Activated B cell treated with CpG ODN at 0.5 μM for 24 hours (primary cell): ENCODE measurements at regions of chr10 and their contacts with region 1.

Region 1: DNA sequence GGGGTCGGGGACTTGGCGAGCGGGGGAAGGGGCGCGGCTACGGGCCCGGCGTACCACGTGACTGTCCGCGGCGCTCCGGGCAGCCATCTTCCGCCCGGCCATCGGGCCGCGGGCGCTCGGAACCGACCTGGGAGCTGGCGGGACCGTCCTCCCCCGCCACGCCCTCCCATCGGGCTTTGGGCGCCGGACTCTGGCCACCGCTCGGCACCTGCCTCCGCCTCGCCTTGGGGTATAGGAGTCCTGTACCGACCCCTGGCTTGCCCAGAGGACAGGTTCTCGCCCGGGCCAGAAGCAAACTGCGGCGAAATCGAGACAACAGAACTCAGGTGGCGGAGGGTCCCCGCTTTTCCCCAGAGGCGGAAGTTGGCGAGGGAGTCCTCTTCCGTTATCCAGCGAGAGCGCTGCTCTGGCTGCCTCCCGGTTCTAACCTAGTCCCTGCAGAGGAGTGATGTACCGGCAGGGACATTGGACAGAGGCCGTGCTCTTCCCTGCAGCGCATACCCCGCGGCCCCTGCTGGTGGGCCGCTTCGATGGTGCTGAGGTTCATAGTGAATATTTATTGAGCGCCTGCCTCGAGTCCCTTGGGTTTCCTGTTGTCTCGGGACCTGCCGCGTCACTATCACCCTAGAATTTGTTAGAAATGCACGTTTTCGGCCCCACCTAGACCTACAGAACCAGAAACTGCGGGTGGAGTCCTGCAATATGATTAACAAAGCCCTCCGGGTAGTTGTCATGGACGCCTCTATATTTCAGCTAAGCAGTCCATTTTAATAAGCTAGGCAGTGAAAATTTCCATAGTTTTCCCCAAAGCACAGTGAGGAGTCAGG is 1.3 kb upstream of the SGMS1 start:
- DNase-seq: no peak
- ATAC-seq: peak; percentile 51
- H3K4me3 Mint-ChIP-seq: peak overlapping the region; percentile 91
- H3K27ac Mint-ChIP-seq: peak overlapping the region; percentile 96
- H3K4me1 Mint-ChIP-seq: peaks cover 30% of the 10 kb centered on the region
- H3K27me3 Mint-ChIP-seq: no peaks in the 10 kb centered on the region
- CTCF ChIP-seq: no peak

Region 2: DNA sequence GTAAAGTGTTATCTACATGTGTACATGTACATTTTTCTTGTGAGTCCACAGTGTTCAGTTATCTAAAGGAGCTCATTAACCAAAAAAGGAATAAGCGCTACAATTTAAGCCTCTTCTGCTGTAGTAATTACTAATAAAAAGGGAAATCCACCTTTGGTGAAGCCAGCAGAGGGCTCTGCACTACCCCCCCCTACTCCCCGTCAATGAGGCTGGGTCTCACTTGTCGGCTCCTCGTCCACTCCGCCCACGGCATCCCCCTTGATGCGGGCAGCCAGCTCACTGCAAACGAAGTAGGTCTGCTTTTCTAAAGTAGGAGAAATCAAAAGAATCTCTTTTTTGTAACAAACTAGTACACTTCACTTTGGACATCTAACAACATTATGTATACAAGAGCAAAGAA is 562.0 kb before region 1 on chr10:
- CTCF ChIA-PET with region 1: no interaction called
- POLR2A ChIA-PET with region 1: interaction called, 4 read pairs
- intact Hi-C with region 1: loop called (anchors 1 kb)
- DNase-seq: no peak
- ATAC-seq: no peak
- H3K4me3 Mint-ChIP-seq: no peak overlapping the region
- H3K27ac Mint-ChIP-seq: no peak overlapping the region
- H3K4me1 Mint-ChIP-seq: peaks cover 6% of the 10 kb centered on the region
- H3K27me3 Mint-ChIP-seq: no peaks in the 10 kb centered on the region
- CTCF ChIP-seq: no peak

Region 3: GRCh38 chr10:50275650-50276235 is 349.3 kb before region 1 on chr10:
- CTCF ChIA-PET with region 1: interaction called, 9 read pairs
- POLR2A ChIA-PET with region 1: no interaction called
- intact Hi-C with region 1: loop called (anchors 5 kb)
- DNase-seq: no peak
- ATAC-seq: peak; percentile 71
- H3K4me3 Mint-ChIP-seq: no peak overlapping the region
- H3K27ac Mint-ChIP-seq: no peak overlapping the region
- H3K4me1 Mint-ChIP-seq: peaks cover 1% of the 10 kb centered on the region
- H3K27me3 Mint-ChIP-seq: peaks cover 13% of the 10 kb centered on the region
- CTCF ChIP-seq: no peak

Region 4: DNA sequence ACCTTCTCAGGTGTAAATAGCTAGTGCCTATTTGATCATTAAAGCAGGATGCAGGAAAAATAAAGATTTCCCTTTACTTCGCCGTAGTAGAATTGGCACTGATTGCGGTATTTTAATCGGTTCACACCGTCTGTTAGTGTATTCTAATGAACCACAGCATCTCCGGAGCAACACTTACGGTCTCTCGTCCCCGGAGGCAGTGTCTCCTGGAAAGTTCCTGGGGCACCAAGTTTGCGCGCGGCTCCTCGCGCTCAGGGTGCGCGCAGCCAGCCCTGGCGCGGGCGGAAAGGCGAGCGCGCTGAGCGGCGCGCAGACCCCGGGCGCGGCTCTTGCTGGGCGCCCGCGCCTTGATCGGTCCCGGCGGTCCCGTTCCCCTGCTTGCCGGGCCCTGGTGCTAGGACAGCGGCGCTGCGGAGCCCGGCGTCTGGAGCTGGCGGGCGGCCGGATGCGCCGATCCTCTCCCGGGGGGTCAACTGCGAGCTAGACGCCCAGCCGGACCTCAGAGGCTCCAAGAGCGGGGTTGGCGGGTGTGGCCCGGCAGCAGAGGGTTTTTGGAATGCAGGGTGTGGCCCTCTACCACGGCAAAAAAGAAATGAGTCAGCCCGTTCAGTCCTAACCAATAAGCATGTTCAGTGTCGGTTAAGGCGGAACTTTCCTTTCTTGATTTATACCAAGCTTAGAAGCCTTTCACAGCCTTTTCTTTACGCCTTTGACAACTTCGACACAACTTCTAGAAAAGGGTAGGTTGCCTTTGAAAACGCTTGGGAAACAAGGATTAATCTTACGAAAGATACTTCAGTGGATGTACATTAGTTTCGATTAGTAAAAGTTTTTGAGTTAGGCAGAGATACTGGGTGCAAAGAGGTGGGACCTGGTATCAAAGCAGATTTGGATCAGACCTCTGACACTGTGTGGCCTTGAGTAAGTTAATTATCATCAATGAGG is 206.9 kb before region 1 on chr10:
- CTCF ChIA-PET with region 1: interaction called, 6 read pairs
- POLR2A ChIA-PET with region 1: interaction called, 10 read pairs
- intact Hi-C with region 1: loop called (anchors 1 kb)
- DNase-seq: peak; percentile 48
- ATAC-seq: peak; percentile 87
- H3K4me3 Mint-ChIP-seq: peak overlapping the region; percentile 92
- H3K27ac Mint-ChIP-seq: peak overlapping the region; percentile 81
- H3K4me1 Mint-ChIP-seq: peaks cover 48% of the 10 kb centered on the region
- H3K27me3 Mint-ChIP-seq: no peaks in the 10 kb centered on the region
- CTCF ChIP-seq: no peak

Region 5: DNA sequence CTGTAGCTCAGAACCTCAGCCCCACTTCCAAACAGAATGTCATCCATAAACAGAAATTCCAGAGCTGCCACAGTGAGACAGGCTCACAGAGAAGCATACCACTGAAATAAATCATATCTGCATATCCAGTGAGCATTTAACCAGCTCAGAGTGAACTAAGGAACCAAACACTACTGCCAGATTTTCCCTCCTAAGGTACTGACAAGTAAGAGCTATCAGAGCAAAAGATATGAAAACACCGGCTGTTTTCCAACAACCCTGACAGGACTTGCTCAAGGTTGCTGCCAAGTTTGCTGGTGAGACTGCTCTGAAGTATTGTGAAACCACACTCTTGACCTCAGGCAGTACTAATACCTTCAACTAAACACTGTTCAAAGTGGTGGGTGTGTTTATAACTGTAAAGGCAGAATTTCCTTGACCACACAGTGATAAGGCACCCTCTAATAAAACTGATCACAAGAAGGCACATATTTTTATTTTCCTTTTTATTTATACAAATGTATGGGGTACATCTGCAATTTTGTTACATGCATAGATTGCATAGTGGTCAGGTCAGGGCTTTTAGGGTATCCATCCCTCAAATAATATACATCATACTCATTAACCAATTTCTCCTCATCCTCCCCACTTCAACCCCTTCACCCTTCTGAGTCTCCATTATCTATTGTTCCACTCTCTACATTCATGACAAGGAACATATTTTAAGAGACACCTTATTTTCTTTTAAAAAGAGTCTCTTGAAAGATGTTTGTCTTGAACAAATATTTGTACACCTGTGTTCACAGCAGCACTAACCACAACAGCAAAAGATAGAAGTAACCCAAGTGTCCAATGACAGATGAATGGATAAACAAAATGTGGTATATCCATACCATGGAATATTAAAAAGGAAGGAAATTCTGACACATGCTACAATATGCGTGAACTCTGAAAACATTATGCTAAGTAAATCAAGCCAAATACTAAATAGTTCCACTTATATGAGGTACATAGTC is 19.5 kb before region 1 on chr10:
- CTCF ChIA-PET with region 1: no interaction called
- POLR2A ChIA-PET with region 1: interaction called, 3 read pairs
- intact Hi-C with region 1: loop called (anchors 2 kb)
- DNase-seq: no peak
- ATAC-seq: no peak
- H3K4me3 Mint-ChIP-seq: no peak overlapping the region
- H3K27ac Mint-ChIP-seq: no peak overlapping the region
- H3K4me1 Mint-ChIP-seq: peaks cover 42% of the 10 kb centered on the region
- H3K27me3 Mint-ChIP-seq: no peaks in the 10 kb centered on the region
- CTCF ChIP-seq: no peak

Region 6: GRCh38 chr10:50679149-50679548 is 54.1 kb after region 1 on chr10:
- CTCF ChIA-PET with region 1: no interaction called
- POLR2A ChIA-PET with region 1: no interaction called
- intact Hi-C with region 1: no loop called
- DNase-seq: no peak
- ATAC-seq: no peak
- H3K4me3 Mint-ChIP-seq: no peak overlapping the region
- H3K27ac Mint-ChIP-seq: no peak overlapping the region
- H3K4me1 Mint-ChIP-seq: no peaks in the 10 kb centered on the region
- H3K27me3 Mint-ChIP-seq: no peaks in the 10 kb centered on the region
- CTCF ChIP-seq: no peak

Region 7: DNA sequence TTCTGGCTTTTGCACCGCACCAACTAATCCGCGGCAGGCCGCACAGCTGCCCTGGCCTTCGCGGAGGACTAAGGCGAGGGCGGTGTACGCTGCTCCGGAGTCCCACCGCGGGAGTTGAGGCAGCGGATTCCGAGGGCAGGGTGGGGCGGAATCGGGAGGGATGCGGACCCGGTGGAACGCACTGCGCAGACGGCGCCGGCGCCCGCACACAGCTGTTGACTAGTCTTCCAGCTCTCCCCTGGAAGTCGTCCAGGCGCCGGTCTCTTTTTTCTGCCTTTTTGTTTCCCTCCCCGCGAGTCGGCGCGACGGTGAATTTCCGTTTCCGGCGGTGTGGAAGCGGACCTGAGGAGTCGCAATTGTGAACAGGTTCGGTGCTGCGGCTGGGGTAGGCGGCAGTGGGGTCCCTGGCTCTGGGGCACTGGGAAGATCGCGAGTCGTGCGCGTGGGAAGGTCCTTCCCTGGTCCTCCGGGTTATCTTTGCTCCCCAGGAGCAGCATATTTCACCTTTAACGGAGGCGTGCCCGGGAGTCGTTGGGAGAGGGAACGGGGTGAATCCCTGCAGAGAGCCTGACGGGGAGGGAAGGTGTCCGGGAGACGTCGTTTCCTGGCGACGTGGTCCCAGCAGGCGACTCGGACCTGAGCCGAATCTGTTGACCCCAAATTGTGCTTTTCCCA is 114.7 kb after region 1 on chr10 and contains the start of gene ASAH2B:
- CTCF ChIA-PET with region 1: no interaction called
- POLR2A ChIA-PET with region 1: interaction called, 4 read pairs
- intact Hi-C with region 1: loop called (anchors 2 kb)
- DNase-seq: peak; percentile 51
- ATAC-seq: peak; percentile 78
- H3K4me3 Mint-ChIP-seq: peak within 1 kb of the TSS; percentile 98
- H3K27ac Mint-ChIP-seq: peak within 1 kb of the TSS; percentile 82
- H3K4me1 Mint-ChIP-seq: peaks cover 18% of the 10 kb centered on the region
- H3K27me3 Mint-ChIP-seq: peaks cover 5% of the 10 kb centered on the region
- CTCF ChIP-seq: no peak
- total RNA-seq, gene ASAH2B: 1.3 and 1.9 TPM in 2 replicates